Activated T-helper 1 cell treated with anti-CD3 and anti-CD28 coated beads, Interleukin-12 subunit alpha, Interleukin-12 subunit beta, Interleukin-2, Interleukin-4 antibody, amounts not matched to agents 30 ng/mL and 10 ng/mL and 1 ng/mL, durations not matched to agents 14 hours and 24 hours and 36 hours (primary cell): ENCODE measurements at regions of chr6 and their contacts with region 1.

Region 1: GRCh38 chr6:45663551-45664221 is 286.0 kb upstream of the SUPT3H start:
- DNase-seq: peak; percentile 47
- H3K4me3 Mint-ChIP-seq: peak overlapping the region; percentile 33
- H3K27ac Mint-ChIP-seq: no peak overlapping the region
- H3K4me1 Mint-ChIP-seq: peaks cover 38% of the 10 kb centered on the region
- H3K27me3 Mint-ChIP-seq: peaks cover 21% of the 10 kb centered on the region

Region 2: GRCh38 chr6:45677381-45678284 is 13.9 kb after region 1 on chr6:
- intact Hi-C with region 1: loop called (anchors 2 kb)
- DNase-seq: peak; percentile 47
- H3K4me3 Mint-ChIP-seq: peak overlapping the region; percentile 75
- H3K27ac Mint-ChIP-seq: peak overlapping the region; percentile 33
- H3K4me1 Mint-ChIP-seq: peaks cover 37% of the 10 kb centered on the region
- H3K27me3 Mint-ChIP-seq: peaks cover 9% of the 10 kb centered on the region

Region 3: DNA sequence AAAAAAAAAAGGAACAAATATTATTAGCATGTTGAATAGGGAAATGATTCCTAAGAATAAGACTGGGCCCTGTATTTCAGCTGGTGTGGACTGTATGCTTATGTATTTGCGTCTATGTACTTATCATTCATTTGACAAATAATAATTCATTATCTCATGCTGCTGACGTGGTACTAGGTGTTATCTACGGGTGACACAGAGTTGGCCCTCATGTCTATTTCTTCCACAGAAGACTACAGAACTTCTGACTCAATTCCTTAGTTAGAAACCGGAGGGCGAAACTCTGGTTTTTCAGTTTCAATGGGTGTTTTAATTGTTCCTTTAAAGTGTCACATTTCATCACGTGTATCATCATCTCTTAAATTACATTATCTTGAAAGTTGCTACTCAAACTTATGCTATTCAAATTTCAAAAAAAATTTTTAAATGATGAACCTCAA is 46.1 kb after region 1 on chr6:
- intact Hi-C with region 1: loop called (anchors 5 kb)
- DNase-seq: peak; percentile 17
- H3K4me3 Mint-ChIP-seq: no peak overlapping the region
- H3K27ac Mint-ChIP-seq: peak overlapping the region; percentile 85
- H3K4me1 Mint-ChIP-seq: peaks cover 22% of the 10 kb centered on the region
- H3K27me3 Mint-ChIP-seq: no peaks in the 10 kb centered on the region